ENCODE measurements at regions of chr13 and their contacts with region 1.

Region 1: GRCh38 chr13:51803422-51804294 is at the start of gene DHRS12:
- DNase-seq: peak; percentile 82
- H3K4me3 Mint-ChIP-seq: peak within 1 kb of the TSS; percentile 87
- H3K27ac Mint-ChIP-seq: peak within 1 kb of the TSS; percentile 98
- H3K4me1 Mint-ChIP-seq: peaks cover 33% of the 10 kb centered on the region
- H3K27me3 Mint-ChIP-seq: peaks cover 4% of the 10 kb centered on the region
- total RNA-seq, gene DHRS12: 2.2 and 3.1 TPM in 2 replicates

Region 2: GRCh38 chr13:51125498-51126226 is 678.0 kb before region 1 on chr13:
- intact Hi-C with region 1: loop called (anchors 2 kb)
- DNase-seq: no peak
- H3K4me3 Mint-ChIP-seq: no peak overlapping the region
- H3K27ac Mint-ChIP-seq: no peak overlapping the region
- H3K4me1 Mint-ChIP-seq: peaks cover 25% of the 10 kb centered on the region
- H3K27me3 Mint-ChIP-seq: peaks cover 18% of the 10 kb centered on the region

Region 3: DNA sequence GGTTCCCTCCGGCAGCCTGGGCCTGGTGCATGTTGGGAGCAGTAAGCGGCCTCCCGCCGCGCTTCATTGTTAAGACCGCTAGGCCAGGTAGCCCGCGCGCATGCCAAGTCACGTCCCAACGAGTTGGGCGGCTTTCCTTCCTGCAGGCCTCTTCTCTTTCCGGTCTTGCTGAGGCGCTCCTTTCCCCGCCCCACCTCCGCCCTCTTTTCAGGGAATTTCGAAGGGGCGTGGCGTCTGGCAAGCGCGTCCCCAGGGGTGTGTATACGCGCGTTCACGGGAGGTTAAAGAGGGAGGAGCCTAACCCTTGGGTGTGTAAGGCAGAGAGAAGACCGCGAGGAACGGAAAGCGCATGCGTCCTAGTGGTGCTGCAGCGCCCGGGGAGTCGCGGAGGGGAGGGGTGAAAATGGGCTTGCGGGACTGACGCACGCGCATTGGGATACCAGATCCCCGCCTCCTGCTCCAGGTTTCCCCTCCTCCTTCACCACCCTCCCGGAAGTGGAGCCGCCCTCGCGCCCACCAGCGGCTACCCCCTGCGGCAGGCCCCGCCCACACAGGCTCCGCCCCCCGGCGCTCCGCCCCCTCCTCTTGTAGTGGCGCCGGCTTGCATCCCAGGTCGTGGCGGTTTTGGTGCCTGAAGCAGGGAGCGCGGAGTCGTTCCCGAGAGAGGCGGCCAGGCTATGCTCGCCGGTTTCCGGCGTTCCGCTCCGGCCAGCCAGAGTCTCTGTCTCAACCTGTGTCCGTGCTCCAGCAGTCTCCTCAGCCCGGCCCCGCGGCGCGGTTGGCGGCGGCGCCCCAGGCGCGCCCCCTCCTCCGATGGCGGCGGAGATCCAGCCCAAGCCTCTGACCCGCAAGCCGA is 219.6 kb before region 1 on chr13 and contains the start of gene WDFY2:
- intact Hi-C with region 1: loop called (anchors 1 kb)
- DNase-seq: peak; percentile 99
- H3K4me3 Mint-ChIP-seq: peak within 1 kb of the TSS; percentile 93
- H3K27ac Mint-ChIP-seq: peak within 1 kb of the TSS; percentile 94
- H3K4me1 Mint-ChIP-seq: peaks cover 30% of the 10 kb centered on the region
- H3K27me3 Mint-ChIP-seq: peaks cover under 1% of the 10 kb centered on the region
- total RNA-seq, gene WDFY2: 9.0 and 9.9 TPM in 2 replicates

Region 4: GRCh38 chr13:51740698-51741097 is 63.0 kb before region 1 on chr13:
- intact Hi-C with region 1: loop called (anchors 2 kb)
- DNase-seq: no peak
- H3K4me3 Mint-ChIP-seq: no peak overlapping the region
- H3K27ac Mint-ChIP-seq: peak overlapping the region; percentile 81
- H3K4me1 Mint-ChIP-seq: peaks cover 25% of the 10 kb centered on the region
- H3K27me3 Mint-ChIP-seq: no peaks in the 10 kb centered on the region

Region 5: DNA sequence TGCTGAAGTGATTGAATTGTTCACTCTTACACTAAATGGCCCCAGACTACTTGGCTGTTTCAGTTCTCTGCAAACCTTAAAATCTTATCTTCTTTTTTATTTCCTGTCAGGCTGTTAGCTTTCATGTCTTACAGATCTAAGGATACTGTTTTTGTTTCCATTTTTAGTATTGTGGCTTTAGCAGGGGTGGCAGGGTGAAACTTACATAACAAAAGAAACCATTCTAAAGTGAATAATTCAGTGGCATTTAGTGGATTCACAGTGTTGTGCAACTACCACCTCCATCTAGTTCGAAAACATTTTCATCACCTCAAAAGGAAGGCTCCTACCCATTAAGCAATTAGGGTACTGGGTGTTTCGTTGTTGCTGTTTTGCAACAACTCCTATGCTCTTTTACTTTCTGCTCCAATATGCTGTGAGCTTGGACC is 21.5 kb after region 1 on chr13:
- intact Hi-C with region 1: loop called (anchors 1 kb)
- DNase-seq: no peak
- H3K4me3 Mint-ChIP-seq: peak overlapping the region; percentile 32
- H3K27ac Mint-ChIP-seq: peak overlapping the region; percentile 33
- H3K4me1 Mint-ChIP-seq: peaks cover 69% of the 10 kb centered on the region
- H3K27me3 Mint-ChIP-seq: peaks cover 53% of the 10 kb centered on the region

Region 6: DNA sequence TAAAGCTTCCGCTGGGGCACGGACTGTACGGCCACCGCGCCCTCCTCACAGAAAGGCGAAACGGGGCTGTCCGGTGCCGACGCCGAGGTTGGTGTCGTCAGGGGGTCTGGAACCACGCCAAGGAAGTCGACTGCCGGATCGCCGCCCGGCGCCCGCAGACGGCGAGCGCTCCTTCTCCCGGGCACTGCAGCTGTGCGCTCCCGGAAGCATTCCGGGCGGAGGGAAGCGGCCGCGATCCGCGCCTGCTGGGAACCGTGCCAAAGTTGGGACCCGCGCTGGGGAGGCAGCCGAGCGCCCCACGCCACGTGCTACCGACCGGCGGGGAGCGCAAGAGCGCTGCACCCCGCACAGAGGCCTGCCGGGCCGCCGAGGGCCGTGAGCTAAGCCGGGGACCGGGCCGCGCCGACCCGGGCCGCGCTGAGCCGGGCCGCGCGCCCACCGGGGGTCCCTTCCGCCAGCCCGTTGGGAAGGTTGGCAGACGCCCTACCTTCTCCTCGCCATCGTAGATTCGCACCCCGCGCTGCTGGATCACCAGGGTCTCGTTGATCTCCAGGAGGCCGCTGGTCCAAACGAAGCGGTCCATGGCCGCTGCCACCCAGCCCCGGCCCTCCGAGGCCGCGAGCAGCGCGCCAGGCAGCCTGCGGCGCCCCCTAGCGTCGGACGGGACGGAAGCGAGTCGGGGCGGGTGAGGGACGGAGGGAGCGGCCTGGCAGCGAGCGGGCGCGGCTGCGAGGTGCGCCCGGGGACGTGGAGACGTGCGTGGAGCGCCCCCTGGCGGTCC is 646.5 kb after region 1 on chr13 and contains the start of gene VPS36:
- intact Hi-C with region 1: loop called (anchors 10 kb)
- DNase-seq: peak; percentile 92
- H3K4me3 Mint-ChIP-seq: peak within 1 kb of the TSS; percentile 95
- H3K27ac Mint-ChIP-seq: peak within 1 kb of the TSS; percentile 91
- H3K4me1 Mint-ChIP-seq: peaks cover 37% of the 10 kb centered on the region
- H3K27me3 Mint-ChIP-seq: no peaks in the 10 kb centered on the region
- total RNA-seq, gene VPS36: 52.3 and 53.5 TPM in 2 replicates

Measured in activated T-helper 2 cell treated with anti-CD3 and anti-CD28 coated beads, Interferon-gamma antibody, Interleukin-2, Interleukin-4, amounts not matched to agents 10 μg/mL and 5 μg/mL and 100 μg/mL, durations not matched to agents 14 hours and 24 hours and 36 hours (primary cell).